B cell (primary cell): ENCODE measurements at regions of chr2 and their contacts with region 1.

Region 1: DNA sequence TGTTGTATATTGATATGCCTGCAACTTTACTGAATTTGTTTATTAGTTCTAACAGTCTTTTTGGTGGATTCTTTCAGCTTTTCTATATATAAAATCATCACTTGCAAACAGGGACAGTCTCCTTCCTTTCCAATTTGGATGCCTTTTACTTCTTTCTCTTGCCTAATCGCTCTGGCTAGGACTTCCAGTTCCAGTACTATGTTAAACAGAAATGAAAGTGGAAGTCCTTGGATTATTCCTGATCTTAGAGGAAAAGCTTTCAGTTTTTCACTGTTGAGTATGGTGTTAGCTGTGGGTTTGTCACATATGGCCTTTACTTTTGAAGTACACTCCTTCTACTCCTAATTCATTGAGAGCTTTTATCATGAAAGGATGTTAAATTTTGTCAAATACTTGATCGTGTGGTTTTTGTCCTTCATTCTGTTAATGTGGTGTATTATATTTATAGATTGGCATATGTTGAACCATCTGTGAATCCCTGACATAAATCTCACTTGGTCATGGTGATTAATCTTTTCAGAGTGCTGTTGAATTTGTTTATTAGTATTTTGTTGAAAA is 52.9 kb downstream of the REL start:
- DNase-seq: no peak
- ATAC-seq: no peak
- H3K4me3 ChIP-seq: no peak overlapping the region
- H3K4me3 Mint-ChIP-seq: no peak overlapping the region
- H3K27ac ChIP-seq: peak overlapping the region in 1 of 2 donors; percentile 48
- H3K27ac Mint-ChIP-seq: peak overlapping the region; percentile 57
- H3K4me1 ChIP-seq: peaks cover 2 to 7% of the 10 kb centered on the region in 2 donors
- H3K4me1 Mint-ChIP-seq: peaks cover 53% of the 10 kb centered on the region
- H3K27me3 ChIP-seq: no peaks in the 10 kb centered on the region
- H3K27me3 Mint-ChIP-seq: no peaks in the 10 kb centered on the region
- CTCF ChIP-seq: no peak

Region 2: GRCh38 chr2:60899230-60899891 is 34.9 kb before region 1 on chr2:
- CTCF ChIA-PET with region 1: no interaction called
- POLR2A ChIA-PET with region 1: no interaction called
- intact Hi-C with region 1: loop called (anchors 5 kb)
- DNase-seq: peak; percentile 59
- ATAC-seq: peak; percentile 58
- H3K4me3 ChIP-seq: no peak overlapping the region
- H3K4me3 Mint-ChIP-seq: peak overlapping the region; percentile 65
- H3K27ac ChIP-seq: peak overlapping the region; percentile 15 to 60
- H3K27ac Mint-ChIP-seq: peak overlapping the region; percentile 89
- H3K4me1 ChIP-seq: peaks cover 11 to 15% of the 10 kb centered on the region in 2 donors
- H3K4me1 Mint-ChIP-seq: peaks cover 29% of the 10 kb centered on the region
- H3K27me3 ChIP-seq: no peaks in the 10 kb centered on the region
- H3K27me3 Mint-ChIP-seq: no peaks in the 10 kb centered on the region
- CTCF ChIP-seq: no peak

Region 3: DNA sequence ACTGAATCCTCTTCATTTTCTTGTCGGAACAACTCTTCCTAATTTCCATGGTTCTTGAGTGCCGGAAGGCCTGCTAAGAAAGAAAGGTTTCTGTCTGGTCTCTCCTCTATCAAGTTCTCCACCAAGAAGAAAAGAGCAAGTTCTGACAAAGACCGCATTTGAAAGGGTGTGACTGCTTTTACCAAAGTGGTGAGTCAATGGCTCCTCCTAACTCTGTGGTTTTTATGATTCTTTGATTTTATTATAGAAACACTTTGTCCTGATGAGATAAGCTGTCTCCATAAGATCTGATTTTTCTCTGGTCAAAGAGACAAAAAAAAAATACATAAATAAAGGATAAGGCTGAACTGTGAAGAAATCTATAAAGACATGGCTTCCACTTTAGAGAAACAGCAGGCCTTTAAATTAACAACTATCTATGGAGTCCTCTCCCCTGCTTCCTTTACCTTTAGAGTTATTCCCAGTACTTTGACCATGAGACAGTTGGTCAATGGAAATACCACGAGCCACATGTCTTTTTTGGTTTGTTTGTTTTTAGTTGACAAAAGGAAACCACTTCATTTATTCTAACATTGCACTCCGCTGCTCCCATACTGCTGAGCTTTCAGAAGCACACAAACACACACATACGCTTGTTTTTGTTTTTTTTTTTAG is 14.8 kb after region 1 on chr2:
- CTCF ChIA-PET with region 1: no interaction called
- POLR2A ChIA-PET with region 1: interaction called, 12 read pairs
- intact Hi-C with region 1: no loop called
- DNase-seq: no peak
- ATAC-seq: no peak
- H3K4me3 ChIP-seq: no peak overlapping the region
- H3K4me3 Mint-ChIP-seq: no peak overlapping the region
- H3K27ac ChIP-seq: no peak overlapping the region
- H3K27ac Mint-ChIP-seq: no peak overlapping the region
- H3K4me1 ChIP-seq: no peaks in the 10 kb centered on the region
- H3K4me1 Mint-ChIP-seq: peaks cover 8% of the 10 kb centered on the region
- H3K27me3 ChIP-seq: no peaks in the 10 kb centered on the region
- H3K27me3 Mint-ChIP-seq: no peaks in the 10 kb centered on the region
- CTCF ChIP-seq: no peak

Region 4: GRCh38 chr2:60966507-60967405 is 32.5 kb after region 1 on chr2:
- CTCF ChIA-PET with region 1: interaction called, 3 read pairs
- POLR2A ChIA-PET with region 1: no interaction called
- intact Hi-C with region 1: loop called (anchors 5 kb)
- DNase-seq: peak; percentile 65
- ATAC-seq: peak; percentile 54
- H3K4me3 ChIP-seq: peak overlapping the region in 4 of 5 experiments; percentile 13 to 52 (median 40)
- H3K4me3 Mint-ChIP-seq: peak overlapping the region; percentile 85
- H3K27ac ChIP-seq: peak overlapping the region; percentile 82 to 85
- H3K27ac Mint-ChIP-seq: peak overlapping the region; percentile 92
- H3K4me1 ChIP-seq: peaks cover 59 to 66% of the 10 kb centered on the region in 2 donors
- H3K4me1 Mint-ChIP-seq: peaks cover 73% of the 10 kb centered on the region
- H3K27me3 ChIP-seq: no peaks in the 10 kb centered on the region
- H3K27me3 Mint-ChIP-seq: no peaks in the 10 kb centered on the region
- CTCF ChIP-seq: no peak